IMR-90 (cell line): ENCODE measurements at regions of chr11 and their contacts with region 1.

Region 1: DNA sequence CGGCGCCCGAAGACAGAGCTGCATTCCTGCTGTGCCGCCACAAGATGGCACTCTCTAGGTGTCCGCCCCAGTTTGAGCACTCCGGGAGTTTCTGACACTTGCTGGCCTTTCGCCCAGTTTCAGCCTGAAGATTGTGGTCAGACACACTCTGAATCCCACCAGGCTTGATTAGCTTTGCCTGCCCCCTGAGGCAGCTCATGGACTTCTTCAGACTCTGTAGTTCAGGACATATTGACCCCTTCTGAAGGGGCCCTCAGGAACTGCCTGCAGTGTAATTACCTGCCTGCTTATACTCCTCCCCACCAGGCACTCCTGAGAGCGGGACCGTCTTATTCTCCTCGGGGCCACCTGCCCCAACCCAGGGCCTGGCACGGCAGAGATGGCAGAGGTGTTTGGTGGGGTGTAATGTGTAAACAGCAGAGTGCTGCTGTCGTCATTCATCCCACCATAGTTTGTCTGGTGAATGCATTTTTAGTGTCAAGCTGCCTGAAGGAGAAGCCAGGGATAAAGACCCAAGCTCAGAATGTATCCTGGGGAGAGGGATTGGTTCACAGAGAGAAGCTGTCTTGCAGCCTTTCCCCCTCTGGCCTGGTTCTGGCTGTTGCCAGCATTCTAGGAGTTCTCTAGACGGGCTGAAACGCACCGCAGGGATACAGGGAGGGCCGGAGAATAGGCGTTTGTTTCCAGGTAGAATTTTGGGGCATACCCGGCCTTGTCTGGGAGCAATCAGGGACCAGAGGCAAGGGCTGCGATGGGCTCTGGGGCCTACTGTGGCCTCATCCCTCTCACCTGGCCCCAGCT is 46.4 kb downstream of the EIF3F start:
- DNase-seq: peak; percentile 84
- ATAC-seq: peak; percentile 98
- H3K4me3 ChIP-seq: no peak overlapping the region
- H3K27ac ChIP-seq: no peak overlapping the region
- H3K4me1 ChIP-seq: 0 out of 2 replicates have a peak, but pooled peaks cover 1% of the 10 kb centered on the region
- H3K27me3 ChIP-seq: peaks cover 4% of the 10 kb centered on the region; the same call in 1 of the 2 replicates
- CTCF ChIP-seq: peak; percentile 95
- POLR2A ChIP-seq: no peak
- RAD21 ChIP-seq: peak; percentile 91

Region 2: GRCh38 chr11:8070417-8071115 is 37.1 kb after region 1 on chr11:
- CTCF ChIA-PET with region 1: interaction called, 6 read pairs
- POLR2A ChIA-PET with region 1: no interaction called
- dilution Hi-C with region 1: no loop called
- in situ Hi-C with region 1: no loop called
- intact Hi-C with region 1: loop called (anchors 1 kb)
- DNase-seq: peak; percentile 61
- ATAC-seq: peak; percentile 57
- H3K4me3 ChIP-seq: no peak overlapping the region
- H3K27ac ChIP-seq: no peak overlapping the region
- H3K4me1 ChIP-seq: peaks cover 12% of the 10 kb centered on the region
- H3K27me3 ChIP-seq: peaks cover 12% of the 10 kb centered on the region; the same call in 1 of the 2 replicates
- CTCF ChIP-seq: peak; percentile 62
- POLR2A ChIP-seq: no peak
- RAD21 ChIP-seq: peak; percentile 58

Region 3: DNA sequence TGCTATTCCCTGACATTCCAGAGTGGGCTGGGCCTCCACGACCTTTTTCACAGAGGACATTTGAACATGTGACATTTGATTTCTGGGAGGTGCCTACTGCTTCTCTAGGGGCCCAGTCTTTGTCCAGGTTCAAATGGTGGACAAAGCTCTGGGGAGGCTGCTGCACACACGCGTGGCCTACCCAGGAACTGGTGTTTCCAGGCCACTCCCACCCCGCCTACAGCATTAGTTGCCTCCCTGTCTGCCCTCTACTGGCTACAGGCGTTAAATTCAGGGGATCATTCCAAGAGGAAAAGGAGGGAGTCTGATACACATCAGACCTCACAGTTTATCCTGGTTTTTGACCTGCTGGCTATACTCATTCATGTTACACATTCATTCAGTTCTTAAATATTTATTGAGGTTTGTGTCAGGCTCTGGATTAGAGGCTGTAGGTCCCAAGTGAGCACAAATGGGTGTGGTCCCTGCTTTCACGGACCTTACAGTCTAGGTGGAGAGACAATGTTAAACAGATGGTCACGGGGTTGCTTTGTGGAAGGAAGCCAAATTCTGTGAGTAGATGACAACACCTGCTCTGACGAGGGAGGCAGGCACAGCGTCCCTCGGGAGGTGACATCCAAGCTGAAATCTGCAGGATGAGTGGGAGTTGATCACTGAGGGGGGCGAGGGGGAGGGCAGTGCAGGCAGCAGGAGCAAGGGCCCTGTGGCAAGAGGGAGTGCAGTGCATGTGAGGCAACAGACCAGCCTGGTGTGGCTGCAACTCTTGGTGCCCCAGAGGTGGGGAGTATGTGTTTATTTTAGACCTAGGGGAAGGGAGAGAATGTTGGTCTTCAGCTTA is 59.3 kb after region 1 on chr11:
- CTCF ChIA-PET with region 1: interaction called, 27 read pairs
- POLR2A ChIA-PET with region 1: no interaction called
- dilution Hi-C with region 1: no loop called
- in situ Hi-C with region 1: loop called (anchors 10 kb)
- intact Hi-C with region 1: loop called (anchors 1 kb)
- DNase-seq: peak; percentile 66
- ATAC-seq: peak; percentile 97
- H3K4me3 ChIP-seq: no peak overlapping the region
- H3K27ac ChIP-seq: no peak overlapping the region
- H3K4me1 ChIP-seq: peaks cover under 1% of the 10 kb centered on the region; the same call in 1 of the 2 replicates
- H3K27me3 ChIP-seq: no peaks in the 10 kb centered on the region
- CTCF ChIP-seq: peak; percentile 73
- POLR2A ChIP-seq: no peak
- RAD21 ChIP-seq: peak; percentile 59